Gastrocnemius medialis (tissue), 4 donors: ENCODE measurements at regions of chrX and their contacts with region 1.

Region 1: DNA sequence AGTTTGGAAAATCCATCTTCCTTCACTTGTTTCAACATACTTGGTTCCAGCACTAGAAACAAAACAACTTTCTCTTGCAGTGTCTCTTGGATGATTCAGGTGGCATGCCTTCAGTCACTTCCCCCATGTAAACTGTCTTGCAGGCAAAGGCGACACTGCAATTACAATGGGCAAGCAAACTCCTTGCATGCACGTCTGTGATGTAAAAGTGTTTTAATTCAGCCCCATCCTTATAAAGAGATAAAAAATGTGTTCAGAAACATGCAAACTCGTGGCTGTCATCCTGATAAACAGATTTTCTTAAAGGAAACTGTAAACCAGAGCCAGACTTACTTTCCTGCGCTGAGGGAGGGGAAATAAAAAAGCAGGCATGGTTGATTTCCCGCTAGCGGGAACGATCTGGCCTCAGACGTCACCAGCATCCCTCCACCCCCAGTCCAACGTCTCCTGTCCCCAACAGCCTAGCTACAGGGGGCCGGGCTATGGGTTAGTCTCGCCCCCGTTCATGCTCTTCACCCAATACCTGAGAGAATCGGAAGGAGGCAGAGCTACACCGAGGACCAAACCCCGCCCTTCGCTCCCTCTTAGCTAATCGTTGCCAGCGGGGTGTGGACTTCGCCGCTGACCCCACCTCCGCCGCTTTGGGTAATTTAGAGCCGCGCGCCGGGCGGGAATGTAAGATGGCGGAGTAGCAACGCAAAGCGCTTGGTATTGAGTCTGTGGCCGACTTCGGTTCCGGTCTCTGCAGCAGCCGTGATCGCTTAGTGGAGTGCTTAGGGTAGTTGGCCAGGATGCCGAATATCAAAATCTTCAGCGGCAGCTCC is at the start of gene PRPS1:
- DNase-seq: peak; percentile 81 to 87
- ATAC-seq: peak; percentile 94 to 98
- H3K4me3 ChIP-seq: peak within 1 kb of the TSS; percentile 57 to 76 (median 71)
- H3K27ac ChIP-seq: peak within 1 kb of the TSS; percentile 73 to 90 (median 84)
- H3K4me1 ChIP-seq: peaks cover 0 to 10% of the 10 kb centered on the region in 2 donors
- H3K27me3 ChIP-seq: no peaks in the 10 kb centered on the region
- CTCF ChIP-seq: no peak
- POLR2A ChIP-seq: peak; percentile 72 to 85
- total RNA-seq, gene PRPS1: 19.6 to 46.0 (median 30.9) TPM

Region 2: DNA sequence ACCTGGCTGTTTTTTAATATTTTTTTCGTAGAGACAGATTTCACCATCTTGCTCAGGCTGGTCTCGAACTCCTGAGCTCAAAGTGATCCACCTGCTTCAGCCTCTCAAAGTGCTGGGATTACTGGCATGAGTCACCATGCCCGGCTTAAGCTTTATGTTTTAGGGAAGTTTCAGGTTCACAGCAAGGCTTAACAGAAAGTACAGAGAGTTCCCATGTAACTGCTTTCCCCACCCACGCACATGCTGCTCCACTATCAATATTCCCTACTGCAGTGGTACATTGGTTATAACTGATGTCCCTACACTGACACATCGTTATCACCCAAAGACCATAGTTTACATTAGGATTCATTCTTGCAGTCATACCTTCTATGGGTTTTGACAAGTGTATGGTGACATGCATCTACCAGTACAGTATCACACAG is 63.0 kb after region 1 on chrX:
- in situ Hi-C with region 1: no loop called
- intact Hi-C with region 1: no loop called
- DNase-seq: no peak
- ATAC-seq: peak; percentile 36 to 73
- H3K4me3 ChIP-seq: no peak overlapping the region
- H3K27ac ChIP-seq: no peak overlapping the region
- H3K4me1 ChIP-seq: no peaks in the 10 kb centered on the region
- H3K27me3 ChIP-seq: no peaks in the 10 kb centered on the region
- CTCF ChIP-seq: no peak
- POLR2A ChIP-seq: no peak

Region 3: GRCh38 chrX:107861056-107861455 is 233.0 kb after region 1 on chrX:
- in situ Hi-C with region 1: no loop called
- intact Hi-C with region 1: no loop called
- DNase-seq: no peak
- ATAC-seq: no peak
- H3K4me3 ChIP-seq: no peak overlapping the region
- H3K27ac ChIP-seq: no peak overlapping the region
- H3K4me1 ChIP-seq: peaks cover 0 to 1% of the 10 kb centered on the region in 2 donors
- H3K27me3 ChIP-seq: no peaks in the 10 kb centered on the region
- CTCF ChIP-seq: no peak
- POLR2A ChIP-seq: no peak

Region 4: DNA sequence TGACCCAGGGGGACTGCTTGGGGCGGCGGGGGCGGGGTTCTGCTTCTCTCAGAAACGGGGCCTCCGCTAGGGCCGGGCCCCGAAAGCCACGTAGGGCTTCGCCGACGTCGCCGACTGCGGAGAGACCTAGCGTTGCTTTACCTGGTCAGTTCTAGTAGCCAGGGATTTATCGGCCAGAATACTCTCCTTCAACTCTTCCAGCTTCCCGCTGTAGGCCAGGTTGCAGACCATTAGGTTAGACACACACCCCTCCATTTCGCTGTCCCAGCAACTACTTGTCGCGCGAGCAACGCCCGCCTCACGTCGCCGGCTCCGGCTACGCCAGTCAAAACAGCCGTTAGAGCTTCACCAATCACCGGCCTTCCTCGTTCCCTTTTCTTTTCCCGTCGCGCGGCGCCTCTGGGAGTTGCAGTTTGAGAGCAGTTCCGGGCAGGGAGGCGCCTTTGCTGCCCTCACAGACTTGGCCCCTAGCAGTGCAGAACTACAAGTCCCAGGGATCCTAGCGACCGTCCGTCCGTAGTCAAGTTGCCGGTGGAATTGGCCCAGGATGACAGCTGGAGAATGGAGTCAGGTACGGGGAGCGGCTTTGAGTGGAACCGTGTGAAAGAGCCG is 463.3 kb after region 1 on chrX and contains the starts of genes ATG4A and PSMD10:
- in situ Hi-C with region 1: loop called in 1 of 4 experiments (anchors 25 kb)
- intact Hi-C with region 1: no loop called
- DNase-seq: peak; percentile 90 to 94
- ATAC-seq: peak; percentile 95 to 97
- H3K4me3 ChIP-seq: peak within 1 kb of the TSS; percentile 60 to 77 (median 74)
- H3K27ac ChIP-seq: peak within 1 kb of the TSS; percentile 82 to 89 (median 86)
- H3K4me1 ChIP-seq: peaks cover 3 to 13% of the 10 kb centered on the region in 2 donors
- H3K27me3 ChIP-seq: peaks cover 0 to 3% (median 0%) of the 10 kb centered on the region in 3 donors
- CTCF ChIP-seq: no peak
- POLR2A ChIP-seq: peak; percentile 61 to 80
- total RNA-seq, gene ATG4A: 18.3 to 22.1 (median 20.4) TPM
- total RNA-seq, gene PSMD10: 16.5 to 33.5 (median 18.6) TPM